GM10248 (cell line): ENCODE measurements at regions of chr3 and their contacts with region 1.

Region 1: DNA sequence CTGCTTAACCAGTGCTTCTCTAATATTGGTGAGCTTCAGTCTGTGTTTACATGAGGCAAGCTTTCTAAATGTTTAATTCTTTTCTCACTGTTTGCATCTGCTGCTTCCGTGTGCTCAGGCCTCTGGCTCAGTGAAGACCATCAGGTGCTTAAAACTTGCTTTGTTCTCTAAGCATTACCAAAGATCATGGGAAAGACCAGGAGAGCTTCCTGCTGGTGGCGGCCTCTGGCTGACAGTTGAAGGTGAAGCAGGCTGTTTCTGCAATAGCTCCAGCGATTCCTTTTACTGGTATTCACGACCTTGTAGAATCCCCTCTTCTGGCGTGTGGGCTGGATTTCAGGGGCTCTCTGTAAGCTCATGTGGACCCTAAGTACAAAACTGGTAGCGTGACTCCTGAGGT is 45.1 kb downstream of the EDEM1 start:
- DNase-seq: no peak
- CTCF ChIP-seq: no peak

Region 2: GRCh38 chr3:5115506-5116162 is 116.9 kb before region 1 on chr3:
- CTCF ChIA-PET with region 1: no interaction called
- POLR2A ChIA-PET with region 1: no interaction called
- DNase-seq: no peak
- CTCF ChIP-seq: no peak

Region 3: DNA sequence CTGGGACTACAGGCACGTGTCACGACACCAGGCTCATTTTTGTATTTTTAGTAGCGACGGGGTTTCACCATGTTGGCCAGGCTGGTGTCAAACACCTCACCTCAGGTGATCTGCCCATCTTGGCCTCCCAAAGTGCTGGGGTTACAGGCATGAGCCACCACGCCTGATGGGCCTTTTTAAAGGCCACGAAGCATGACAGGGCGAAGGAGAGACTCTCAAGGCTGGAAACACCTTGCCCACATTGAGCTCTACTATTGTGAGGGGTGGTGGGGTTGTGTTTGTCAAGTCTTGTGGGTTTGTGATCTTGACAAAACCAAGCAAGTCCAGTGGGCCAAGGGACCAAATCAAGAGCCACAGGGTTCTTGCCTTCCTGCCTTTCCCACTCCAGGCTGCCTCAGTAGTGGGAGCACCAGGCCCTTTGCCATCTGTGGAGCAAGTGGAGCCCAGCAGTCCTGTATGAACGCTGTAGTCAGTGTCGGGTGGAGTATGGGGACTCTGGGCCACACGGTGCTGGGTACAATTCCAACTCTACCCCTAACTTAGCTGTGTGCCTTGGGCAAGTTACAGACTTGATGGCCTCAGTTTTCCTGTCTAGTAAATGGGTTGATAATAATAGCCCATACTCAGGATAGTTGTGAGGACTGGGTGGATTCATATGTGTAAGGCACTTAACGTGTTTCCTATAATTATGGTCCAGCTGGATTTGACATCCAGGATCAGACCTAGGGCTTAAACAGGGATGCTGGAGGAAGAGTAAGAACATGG is 11.7 kb before region 1 on chr3:
- CTCF ChIA-PET with region 1: interaction called, 14 read pairs
- POLR2A ChIA-PET with region 1: no interaction called
- DNase-seq: no peak
- CTCF ChIP-seq: no peak